ENCODE measurements at regions of chr17 and their contacts with region 1.

Region 1: GRCh38 chr17:27293898-27294688 is at the start of gene WSB1:
- DNase-seq: peak; percentile 47 to 94
- H3K4me3 ChIP-seq: peak within 1 kb of the TSS; percentile 96 to 100 (median 99)
- H3K27ac ChIP-seq: peak within 1 kb of the TSS; percentile 95
- H3K4me1 ChIP-seq: peaks cover 0 to 8% (median 4%) of the 10 kb centered on the region in 4 experiments; a peak in 6 of 7 replicates
- H3K27me3 ChIP-seq: no peaks in the 10 kb centered on the region
- CTCF ChIP-seq: no peak
- EP300 ChIP-seq: no peak
- POLR2A ChIP-seq: peak; percentile 93 to 96
- RAD21 ChIP-seq: no peak
- total RNA-seq, gene WSB1: 101 and 113 TPM in 2 replicates

Region 2: GRCh38 chr17:27236717-27237315 is 57.3 kb before region 1 on chr17:
- CTCF ChIA-PET with region 1: interaction called, 14 read pairs
- POLR2A ChIA-PET with region 1: interaction called, 15 read pairs
- DNase-seq: peak in 1 of 2 experiments; percentile 86
- H3K4me3 ChIP-seq: no peak overlapping the region
- H3K27ac ChIP-seq: no peak overlapping the region
- H3K4me1 ChIP-seq: no peaks in the 10 kb centered on the region; a peak in 1 of 7 replicates
- H3K27me3 ChIP-seq: no peaks in the 10 kb centered on the region
- CTCF ChIP-seq: peak in 2 of 3 experiments; percentile 66 to 75; a peak in 3 of 4 replicates
- EP300 ChIP-seq: no peak
- POLR2A ChIP-seq: no peak
- RAD21 ChIP-seq: peak; percentile 82 to 84

Region 3: DNA sequence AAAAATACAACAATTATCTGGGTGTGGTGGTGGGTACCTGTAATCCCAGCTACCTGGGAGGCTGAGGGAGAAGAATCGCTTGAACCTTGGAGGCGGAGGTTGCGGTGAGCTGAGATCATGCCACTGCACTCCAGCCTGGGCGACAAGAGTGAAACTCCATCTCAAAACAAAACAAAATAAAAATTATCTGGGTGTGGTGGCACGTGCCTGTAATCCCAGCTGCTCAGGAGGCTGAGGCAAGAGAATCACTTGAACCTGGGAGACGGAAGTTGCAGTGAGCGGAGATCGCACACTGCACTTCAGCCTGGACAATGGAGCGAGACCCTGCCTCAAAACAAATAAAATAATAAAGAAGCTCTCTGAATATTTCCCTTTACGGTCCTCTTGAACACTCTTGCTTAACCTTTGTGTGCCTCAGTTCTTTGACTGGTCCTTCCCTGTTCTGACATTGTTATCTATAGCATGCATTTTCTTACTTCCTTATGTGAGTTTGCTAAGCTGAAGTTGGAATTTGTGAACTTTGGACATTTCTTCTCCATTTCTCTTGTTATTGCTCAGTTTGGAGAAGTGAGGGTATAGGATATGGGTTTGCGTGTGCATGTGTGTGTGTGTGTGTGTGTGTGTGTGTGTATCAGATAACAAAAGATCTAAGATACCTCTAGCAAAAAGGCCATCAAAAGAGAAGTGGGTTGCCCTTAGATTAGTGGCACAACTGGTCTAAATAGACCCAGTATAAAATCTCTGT is 29.9 kb before region 1 on chr17:
- CTCF ChIA-PET with region 1: interaction called, 3 read pairs
- POLR2A ChIA-PET with region 1: interaction called, 16 read pairs
- DNase-seq: no peak
- H3K4me3 ChIP-seq: no peak overlapping the region
- H3K27ac ChIP-seq: no peak overlapping the region
- H3K4me1 ChIP-seq: no peaks in the 10 kb centered on the region
- H3K27me3 ChIP-seq: no peaks in the 10 kb centered on the region
- CTCF ChIP-seq: no peak
- EP300 ChIP-seq: no peak
- POLR2A ChIP-seq: no peak
- RAD21 ChIP-seq: no peak

Region 4: GRCh38 chr17:27282054-27282551 is 12.0 kb before region 1 on chr17:
- CTCF ChIA-PET with region 1: interaction called, 8 read pairs
- POLR2A ChIA-PET with region 1: interaction called, 46 read pairs
- DNase-seq: no peak
- H3K4me3 ChIP-seq: no peak overlapping the region
- H3K27ac ChIP-seq: no peak overlapping the region
- H3K4me1 ChIP-seq: peaks cover 0 to 4% (median 0%) of the 10 kb centered on the region in 4 experiments; a peak in 1 of 7 replicates
- H3K27me3 ChIP-seq: no peaks in the 10 kb centered on the region; a peak in 1 of 7 replicates
- CTCF ChIP-seq: no peak
- EP300 ChIP-seq: no peak
- POLR2A ChIP-seq: no peak
- RAD21 ChIP-seq: no peak

Region 5: DNA sequence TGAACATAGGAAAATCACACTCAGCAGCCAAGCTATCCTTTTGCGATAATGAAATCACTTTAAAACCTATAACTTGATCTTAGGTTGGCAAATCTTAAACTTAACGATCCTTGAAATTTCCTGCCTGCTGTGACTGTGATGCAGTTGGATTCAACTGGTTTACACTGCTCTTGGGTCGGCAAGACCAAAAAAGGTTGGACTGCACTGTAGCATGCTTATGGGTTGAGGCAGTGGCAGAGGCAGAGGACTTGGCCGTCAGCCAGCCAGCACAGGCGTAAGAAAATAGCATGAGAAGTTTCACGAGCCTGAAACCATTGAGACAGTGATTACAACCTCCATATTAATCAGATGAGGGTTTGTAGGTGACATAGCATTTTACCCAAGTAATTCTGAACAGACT is 21.2 kb after region 1 on chr17:
- CTCF ChIA-PET with region 1: interaction called, 4 read pairs
- POLR2A ChIA-PET with region 1: interaction called, 33 read pairs
- DNase-seq: no peak
- H3K4me3 ChIP-seq: no peak overlapping the region
- H3K27ac ChIP-seq: no peak overlapping the region
- H3K4me1 ChIP-seq: no peaks in the 10 kb centered on the region
- H3K27me3 ChIP-seq: no peaks in the 10 kb centered on the region
- CTCF ChIP-seq: no peak
- EP300 ChIP-seq: no peak
- POLR2A ChIP-seq: no peak
- RAD21 ChIP-seq: no peak

Region 6: DNA sequence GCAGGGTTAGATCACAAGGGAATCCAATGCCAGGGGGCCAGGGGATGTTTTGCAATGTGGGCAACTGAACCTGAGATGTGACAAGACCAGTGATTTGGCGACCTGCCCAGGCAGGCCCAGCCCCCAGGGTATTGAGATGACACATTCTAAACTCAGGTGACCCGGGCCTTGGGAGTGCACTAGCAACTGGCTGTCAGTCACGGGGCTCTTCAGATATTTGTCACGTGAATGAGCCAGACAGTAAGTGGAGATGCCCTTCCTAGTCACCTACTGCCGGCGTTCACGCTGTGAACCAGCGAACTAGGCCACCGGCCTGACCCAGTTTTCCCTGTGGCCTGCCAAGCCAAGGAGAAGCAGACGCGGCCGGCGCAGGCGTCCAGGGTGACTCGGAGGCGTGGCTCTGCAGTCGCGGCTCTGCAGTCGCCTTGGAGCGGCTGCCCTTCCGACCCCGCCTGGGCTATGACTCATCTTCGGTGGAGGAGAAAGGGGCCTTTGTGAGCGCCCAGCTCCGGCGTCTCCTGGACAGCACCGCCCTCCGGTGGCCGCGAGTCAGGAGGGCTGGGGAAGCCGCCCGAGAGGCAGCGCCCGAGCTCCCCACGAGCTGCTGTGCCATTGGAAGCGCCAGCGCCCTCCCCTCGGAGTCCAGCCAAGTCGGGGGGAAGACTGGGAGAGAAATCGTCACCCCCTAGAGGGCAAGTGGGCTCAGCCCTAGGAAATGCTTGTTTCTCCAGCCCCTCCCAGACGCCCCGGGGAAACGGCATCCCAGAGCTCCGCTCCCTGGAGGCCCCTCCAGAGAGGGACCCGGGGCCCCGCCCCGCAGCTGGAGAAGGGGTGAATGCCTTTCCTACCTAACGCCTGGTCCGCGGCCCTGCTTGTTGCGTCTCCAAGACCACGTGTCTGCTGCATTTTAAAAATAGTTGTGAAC is 38.7 kb after region 1 on chr17:
- CTCF ChIA-PET with region 1: interaction called, 7 read pairs
- POLR2A ChIA-PET with region 1: interaction called, 12 read pairs
- DNase-seq: peak; percentile 89 to 95
- H3K4me3 ChIP-seq: peak overlapping the region; percentile 14 to 66 (median 56)
- H3K27ac ChIP-seq: peak overlapping the region; percentile 24; the same call in 1 of the 2 replicates
- H3K4me1 ChIP-seq: peaks cover 0 to 6% (median 5%) of the 10 kb centered on the region in 4 experiments; a peak in 6 of 7 replicates
- H3K27me3 ChIP-seq: no peaks in the 10 kb centered on the region; a peak in 1 of 7 replicates
- CTCF ChIP-seq: peak; percentile 65 to 81 (median 75)
- EP300 ChIP-seq: peak in 1 of 2 experiments; percentile 9; a peak in 1 of 3 replicates
- POLR2A ChIP-seq: peak in 1 of 2 experiments; percentile 55; a peak in 2 of 3 replicates
- RAD21 ChIP-seq: peak; percentile 86 to 92